MCF 10A (cell line): ENCODE measurements at regions of chr7 and their contacts with region 1.

Region 1: DNA sequence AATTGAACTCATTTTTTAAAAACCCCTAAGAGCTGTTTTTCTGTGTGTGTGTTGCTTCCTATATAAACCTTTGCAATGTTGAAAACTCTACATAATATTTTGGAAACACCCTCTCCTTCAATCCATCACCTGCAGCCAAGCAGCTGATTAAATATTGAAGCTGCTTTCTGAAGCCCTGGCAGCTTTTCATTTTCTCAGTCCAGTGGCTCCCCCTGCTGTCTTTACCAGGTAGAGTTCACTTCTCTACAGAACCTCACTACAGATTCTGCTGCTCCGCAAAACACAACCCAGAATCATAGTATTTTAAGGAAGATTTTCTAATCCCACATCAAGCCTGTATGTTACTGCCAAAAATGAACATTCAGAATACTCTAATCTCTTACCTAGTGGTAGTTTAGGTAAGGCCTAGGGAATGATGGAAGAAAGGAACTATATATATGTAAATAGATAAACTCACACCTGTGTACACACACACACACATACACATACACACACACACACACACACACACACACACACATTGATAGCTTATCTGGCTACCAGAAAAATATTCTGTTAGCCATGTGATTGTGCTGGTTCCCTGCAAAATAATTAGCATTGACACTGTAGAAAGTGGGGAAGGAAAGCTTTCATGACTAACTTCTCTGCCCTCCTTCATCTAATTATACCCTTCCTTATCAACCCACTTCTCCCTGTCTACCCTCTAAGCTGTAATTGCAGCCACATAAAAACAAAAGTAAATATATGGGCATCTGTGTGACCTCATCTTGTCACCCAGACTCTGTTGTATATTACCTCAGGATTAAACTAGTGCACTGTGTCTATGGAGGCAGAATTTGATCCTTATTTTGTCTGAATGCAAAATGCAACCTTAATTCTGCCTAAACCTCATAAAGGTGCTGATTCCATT is 229.5 kb upstream of the FZD1 start:
- DNase-seq: peak; percentile 57
- H3K4me3 Mint-ChIP-seq: no peak overlapping the region
- H3K27ac Mint-ChIP-seq: no peak overlapping the region
- H3K4me1 Mint-ChIP-seq: no peaks in the 10 kb centered on the region
- H3K27me3 Mint-ChIP-seq: no peaks in the 10 kb centered on the region
- CTCF ChIP-seq: peak; percentile 72

Region 2: DNA sequence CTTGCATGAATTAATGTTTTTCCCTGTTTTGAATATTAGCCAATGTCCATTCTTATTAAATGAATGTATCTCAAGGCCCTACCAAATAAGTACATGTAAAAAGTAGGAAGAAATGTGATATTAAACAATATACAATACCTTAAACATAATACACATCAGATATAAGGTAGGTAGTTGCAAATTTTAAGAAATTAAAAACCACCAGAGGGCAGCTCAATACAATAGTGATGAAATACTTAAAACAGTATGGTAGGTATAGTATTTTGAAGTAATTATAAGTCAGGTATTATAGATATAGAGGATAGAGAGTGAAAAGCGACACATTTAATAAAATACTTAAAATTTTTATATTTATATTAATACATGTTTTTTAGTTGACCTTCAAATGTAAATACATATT is 482.2 kb before region 1 on chr7:
- CTCF ChIA-PET with region 1: interaction called, 16 read pairs
- POLR2A ChIA-PET with region 1: interaction called, 3 read pairs
- intact Hi-C with region 1: no loop called
- DNase-seq: peak; percentile 34
- H3K4me3 Mint-ChIP-seq: no peak overlapping the region
- H3K27ac Mint-ChIP-seq: no peak overlapping the region
- H3K4me1 Mint-ChIP-seq: no peaks in the 10 kb centered on the region
- H3K27me3 Mint-ChIP-seq: no peaks in the 10 kb centered on the region
- CTCF ChIP-seq: peak; percentile 30

Region 3: DNA sequence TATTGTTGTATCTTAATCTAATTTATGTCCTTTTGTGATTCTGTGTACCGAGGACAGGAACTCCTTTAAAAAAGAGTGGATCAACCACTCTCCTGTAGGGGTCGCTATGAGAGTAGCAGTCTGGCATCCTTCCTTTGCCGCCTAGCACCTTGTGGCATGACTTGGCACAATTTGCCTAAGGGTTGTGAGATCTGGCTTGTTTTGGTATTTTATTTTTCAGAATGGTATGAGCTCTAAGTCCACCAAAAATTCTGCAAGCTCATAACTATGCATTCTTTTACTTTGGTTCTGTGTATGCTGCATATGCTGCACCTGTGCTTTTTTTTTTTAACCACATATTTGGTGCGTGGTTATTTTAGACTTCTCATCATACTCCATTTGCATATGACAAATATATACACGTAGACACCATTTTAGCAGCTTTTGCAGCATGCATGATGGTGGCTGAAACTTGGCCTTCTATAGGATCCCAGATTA is 325.8 kb before region 1 on chr7:
- CTCF ChIA-PET with region 1: no interaction called
- POLR2A ChIA-PET with region 1: no interaction called
- intact Hi-C with region 1: loop called (anchors 1 kb)
- DNase-seq: peak; percentile 75
- H3K4me3 Mint-ChIP-seq: no peak overlapping the region
- H3K27ac Mint-ChIP-seq: no peak overlapping the region
- H3K4me1 Mint-ChIP-seq: peaks cover 26% of the 10 kb centered on the region
- H3K27me3 Mint-ChIP-seq: no peaks in the 10 kb centered on the region
- CTCF ChIP-seq: peak; percentile 57

Region 4: DNA sequence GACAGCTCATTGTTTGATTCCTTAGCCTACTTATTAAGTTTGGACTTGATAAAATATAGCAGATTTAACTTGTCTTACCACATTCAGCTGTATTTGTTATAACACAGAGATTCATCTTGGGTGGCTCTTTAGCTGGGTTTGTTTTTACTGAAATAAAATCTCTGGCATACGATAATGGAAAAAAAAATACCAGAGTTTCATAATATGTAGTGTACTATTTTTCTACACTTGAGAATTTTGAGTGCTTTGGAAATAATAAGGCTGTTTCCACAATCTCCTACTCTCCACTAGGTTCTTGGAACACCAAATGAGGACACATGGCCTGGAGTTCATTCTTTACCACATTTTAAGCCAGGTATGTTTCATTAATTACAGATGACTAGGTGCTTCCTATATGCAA is 10.9 kb after region 1 on chr7:
- CTCF ChIA-PET with region 1: interaction called, 11 read pairs
- POLR2A ChIA-PET with region 1: no interaction called
- intact Hi-C with region 1: no loop called
- DNase-seq: no peak
- H3K4me3 Mint-ChIP-seq: no peak overlapping the region
- H3K27ac Mint-ChIP-seq: no peak overlapping the region
- H3K4me1 Mint-ChIP-seq: peaks cover 3% of the 10 kb centered on the region
- H3K27me3 Mint-ChIP-seq: no peaks in the 10 kb centered on the region
- CTCF ChIP-seq: no peak